Pancreas (tissue), 10 donors: ENCODE measurements at regions of chr11 and their contacts with region 1.

Region 1: DNA sequence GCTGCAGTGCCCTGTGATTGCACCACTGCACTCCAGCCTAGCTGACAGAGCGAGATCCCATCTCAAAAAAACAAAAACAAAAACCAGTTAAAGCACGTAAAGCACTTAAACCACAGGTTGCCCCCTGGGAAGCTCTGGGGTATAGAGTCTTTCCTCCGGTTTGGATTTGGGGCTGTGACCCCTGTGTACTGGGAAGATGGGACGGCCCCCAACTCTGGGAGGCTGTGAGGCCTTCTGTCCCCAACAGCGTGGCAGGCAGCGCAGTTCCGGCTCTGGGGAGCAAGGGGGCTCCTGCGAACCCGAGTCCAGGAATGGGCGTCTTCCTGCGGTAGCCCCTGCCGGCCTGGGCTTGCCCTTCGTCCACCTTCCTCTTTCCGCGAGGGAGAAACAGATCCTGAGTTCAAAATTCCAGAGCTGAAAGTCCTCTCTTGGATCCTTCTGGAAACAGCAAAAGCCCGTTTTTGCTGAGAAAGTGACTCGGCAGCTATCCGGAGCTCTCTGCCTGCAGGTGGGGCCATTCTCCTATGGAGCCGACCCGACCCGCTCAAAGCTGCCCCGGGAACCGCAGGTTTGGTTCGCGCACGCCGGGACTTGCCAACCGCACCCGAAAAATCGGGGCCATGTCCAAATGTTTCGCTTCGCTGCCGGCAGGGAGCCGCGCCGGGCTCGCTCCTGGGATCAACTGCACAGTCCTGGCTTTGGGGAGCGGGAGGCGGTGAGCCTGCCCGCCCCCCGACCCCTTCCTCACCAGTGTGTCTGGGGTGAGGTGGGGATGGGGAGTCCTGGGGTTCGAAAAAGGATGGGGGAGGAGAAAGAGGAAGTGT is 36.3 kb upstream of the POLA2 start:
- DNase-seq: peak in 5 of 6 donors; percentile 49 to 76 (median 60)
- ATAC-seq: peak; percentile 90 to 96 (median 94)
- H3K4me3 ChIP-seq: peak overlapping the region in 2 of 4 donors; percentile 28 to 38
- H3K27ac ChIP-seq: no peak overlapping the region
- H3K4me1 ChIP-seq: no peaks in the 10 kb centered on the region
- H3K27me3 ChIP-seq: no peaks in the 10 kb centered on the region
- CTCF ChIP-seq: peak in 2 of 4 donors; percentile 18 to 24

Region 2: DNA sequence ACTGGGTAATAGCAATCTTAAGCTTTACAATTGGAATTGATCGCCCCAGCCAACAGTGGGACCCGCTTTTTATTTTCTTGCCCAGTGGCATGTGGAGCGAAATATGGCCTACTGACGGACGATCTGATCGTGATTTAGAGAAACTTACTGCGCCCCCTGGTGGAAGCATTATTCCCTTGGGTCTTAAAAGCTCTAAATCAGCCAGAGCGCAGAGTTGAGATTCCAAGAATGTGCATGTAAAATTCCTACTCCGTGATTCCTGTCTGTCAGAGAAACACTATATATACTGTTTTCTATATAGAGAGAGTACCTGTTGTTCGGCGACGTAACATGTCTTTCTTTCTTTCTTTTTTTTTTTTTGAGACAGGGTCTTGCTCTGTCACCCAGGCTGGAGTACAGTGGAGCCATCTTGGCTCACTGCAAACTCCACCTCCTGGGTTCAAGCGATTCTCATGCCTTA is 104.5 kb after region 1 on chr11:
- intact Hi-C with region 1: loop called in 1 of 3 experiments (anchors 10 kb)
- DNase-seq: peak in 5 of 6 donors; percentile 76 to 88 (median 78)
- ATAC-seq: peak; percentile 35 to 62 (median 58)
- H3K4me3 ChIP-seq: no peak overlapping the region
- H3K27ac ChIP-seq: no peak overlapping the region
- H3K4me1 ChIP-seq: peaks cover 3 to 9% (median 6%) of the 10 kb centered on the region in 3 donors
- H3K27me3 ChIP-seq: no peaks in the 10 kb centered on the region
- CTCF ChIP-seq: peak; percentile 66 to 78 (median 77)